Left colon (tissue), 2 donors: ENCODE measurements at regions of chr11 and their contacts with region 1.

Region 1: DNA sequence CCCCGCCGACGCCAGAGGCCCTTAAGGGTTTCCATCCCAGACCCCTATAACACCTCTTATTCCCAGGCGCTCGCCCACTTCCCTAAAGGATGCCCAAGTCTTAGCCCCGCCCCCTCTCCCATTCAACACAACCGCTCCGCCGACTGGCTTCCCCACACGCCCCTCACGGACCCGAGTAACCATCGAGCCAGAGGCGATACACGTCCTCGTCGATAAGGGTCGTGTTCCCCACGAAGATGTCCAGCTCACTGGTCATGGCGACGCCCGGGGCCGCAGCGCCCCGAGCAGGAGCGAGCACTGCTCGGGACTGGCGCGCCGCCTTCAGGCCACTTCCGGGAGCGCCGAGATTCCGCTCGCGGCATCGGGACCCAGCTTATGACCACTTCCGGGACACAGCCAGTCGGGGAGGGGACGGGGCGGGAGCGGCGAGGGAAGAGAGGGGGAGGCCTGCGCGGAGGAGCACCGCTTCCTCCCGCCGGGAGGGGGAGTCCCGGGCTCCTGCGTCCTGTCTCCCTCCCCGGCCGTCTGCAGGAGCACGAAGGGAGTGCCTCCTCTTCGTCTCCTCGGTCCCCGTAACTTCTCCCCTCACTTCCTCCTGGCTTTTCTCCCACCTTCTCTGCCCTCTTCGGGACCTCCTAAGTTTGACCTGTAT is at the start of gene FIBP:
- DNase-seq: peak; percentile 97 to 98
- ATAC-seq: peak; percentile 80
- total RNA-seq, gene FIBP: 47.7 to 49.6 TPM

Region 2: GRCh38 chr11:65766535-65766934 is 121.8 kb before region 1 on chr11:
- intact Hi-C with region 1: no loop called
- DNase-seq: no peak
- ATAC-seq: no peak

Region 3: DNA sequence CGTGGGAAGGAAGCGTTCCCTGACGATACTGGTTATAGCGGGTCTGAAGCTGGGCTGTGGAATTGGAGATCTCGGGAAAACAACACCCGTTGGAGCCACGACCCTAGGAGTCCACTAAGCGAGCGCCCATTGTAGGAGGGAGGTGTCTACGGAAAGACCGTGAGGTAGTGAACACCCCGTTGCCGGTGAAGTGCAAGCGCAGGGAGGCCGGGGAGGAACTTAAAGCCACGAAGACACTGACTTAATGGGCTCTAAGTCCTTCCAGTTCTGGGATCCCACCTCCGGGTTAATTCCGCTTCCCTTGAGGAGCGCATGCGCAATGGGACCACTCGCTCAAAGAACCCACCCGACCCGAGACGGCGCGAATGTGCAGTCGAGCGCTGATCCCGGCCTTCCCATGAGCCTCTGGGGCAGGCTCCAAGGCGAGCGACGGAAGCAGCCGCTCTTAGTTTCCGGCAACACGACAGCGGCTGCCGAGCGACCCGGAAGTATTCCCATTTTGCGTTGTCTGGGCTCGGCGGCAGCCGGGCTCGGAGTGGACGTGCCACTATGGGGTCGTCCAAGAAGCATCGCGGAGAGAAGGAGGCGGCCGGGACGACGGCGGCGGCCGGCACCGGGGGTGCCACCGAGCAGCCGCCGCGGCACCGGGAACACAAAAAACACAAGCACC is 73.1 kb after region 1 on chr11 and contains the start of gene SART1:
- intact Hi-C with region 1: loop called in 1 of 2 experiments (anchors 5 kb)
- DNase-seq: peak; percentile 96 to 98
- ATAC-seq: peak; percentile 99
- total RNA-seq, gene SART1: 41.1 to 46.4 TPM

Region 4: GRCh38 chr11:65988791-65989592 is 100.7 kb after region 1 on chr11:
- intact Hi-C with region 1: loop called (anchors 5 to 10 kb)
- DNase-seq: peak; percentile 85 to 94
- ATAC-seq: peak; percentile 99

Region 5: GRCh38 chr11:66001942-66002647 is 113.8 kb after region 1 on chr11 and contains the starts of genes BANF1 and EIF1AD:
- intact Hi-C with region 1: no loop called
- DNase-seq: peak; percentile 91 to 92
- ATAC-seq: peak; percentile 89
- total RNA-seq, gene BANF1: 103 to 111 TPM
- total RNA-seq, gene EIF1AD: 21.6 to 31.3 TPM